Spleen (tissue), 13 donors: ENCODE measurements at regions of chr6 and their contacts with region 1.

Region 1: DNA sequence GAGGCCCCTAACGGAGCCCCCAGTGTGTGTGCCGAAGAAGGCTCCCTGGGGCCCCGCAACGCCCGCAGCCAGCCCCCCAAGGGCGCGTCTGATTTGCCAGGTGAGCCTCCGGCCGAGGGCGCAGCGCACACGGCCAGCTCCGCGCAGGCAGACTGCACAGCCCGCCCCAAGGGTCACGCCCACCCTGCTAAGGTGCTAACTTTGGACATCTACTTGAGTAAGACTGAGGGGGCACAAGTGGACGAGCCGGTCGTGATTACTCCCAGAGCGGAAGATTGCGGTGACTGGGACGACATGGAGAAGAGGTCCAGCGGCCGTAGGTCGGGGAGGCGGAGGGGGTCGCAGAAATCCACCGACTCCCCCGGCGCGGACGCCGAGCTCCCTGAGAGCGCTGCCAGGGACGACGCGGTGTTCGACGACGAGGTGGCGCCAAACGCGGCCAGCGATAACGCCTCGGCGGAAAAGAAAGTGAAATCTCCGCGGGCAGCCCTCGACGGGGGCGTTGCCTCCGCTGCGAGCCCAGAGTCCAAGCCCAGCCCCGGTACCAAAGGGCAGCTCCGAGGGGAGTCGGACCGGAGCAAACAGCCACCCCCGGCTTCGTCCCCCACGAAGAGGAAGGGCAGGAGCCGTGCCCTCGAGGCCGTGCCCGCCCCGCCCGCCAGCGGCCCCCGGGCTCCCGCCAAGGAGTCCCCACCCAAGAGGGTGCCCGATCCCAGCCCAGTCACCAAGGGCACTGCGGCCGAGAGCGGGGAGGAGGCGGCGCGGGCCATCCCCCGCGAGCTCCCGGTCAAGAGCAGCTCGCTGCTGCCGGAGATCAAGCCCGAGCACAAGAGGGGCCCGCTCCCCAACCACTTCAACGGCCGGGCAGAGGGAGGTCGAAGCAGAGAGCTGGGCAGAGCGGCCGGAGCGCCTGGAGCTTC is 117.0 kb downstream of the RTN4IP1 start:
- DNase-seq: peak; percentile 98
- H3K4me3 ChIP-seq: peak overlapping the region; percentile 60 to 92 (median 68)
- H3K27ac ChIP-seq: peak overlapping the region; percentile 93 to 100 (median 98)
- H3K4me1 ChIP-seq: peaks cover 27 to 80% (median 71%) of the 10 kb centered on the region in 6 donors
- H3K27me3 ChIP-seq: peaks cover 0 to 16% (median 4%) of the 10 kb centered on the region in 7 donors
- CTCF ChIP-seq: peak in 7 of 11 experiments; percentile 35 to 56 (median 44)
- POLR2A ChIP-seq: peak in 1 of 3 donors; percentile 49

Region 2: DNA sequence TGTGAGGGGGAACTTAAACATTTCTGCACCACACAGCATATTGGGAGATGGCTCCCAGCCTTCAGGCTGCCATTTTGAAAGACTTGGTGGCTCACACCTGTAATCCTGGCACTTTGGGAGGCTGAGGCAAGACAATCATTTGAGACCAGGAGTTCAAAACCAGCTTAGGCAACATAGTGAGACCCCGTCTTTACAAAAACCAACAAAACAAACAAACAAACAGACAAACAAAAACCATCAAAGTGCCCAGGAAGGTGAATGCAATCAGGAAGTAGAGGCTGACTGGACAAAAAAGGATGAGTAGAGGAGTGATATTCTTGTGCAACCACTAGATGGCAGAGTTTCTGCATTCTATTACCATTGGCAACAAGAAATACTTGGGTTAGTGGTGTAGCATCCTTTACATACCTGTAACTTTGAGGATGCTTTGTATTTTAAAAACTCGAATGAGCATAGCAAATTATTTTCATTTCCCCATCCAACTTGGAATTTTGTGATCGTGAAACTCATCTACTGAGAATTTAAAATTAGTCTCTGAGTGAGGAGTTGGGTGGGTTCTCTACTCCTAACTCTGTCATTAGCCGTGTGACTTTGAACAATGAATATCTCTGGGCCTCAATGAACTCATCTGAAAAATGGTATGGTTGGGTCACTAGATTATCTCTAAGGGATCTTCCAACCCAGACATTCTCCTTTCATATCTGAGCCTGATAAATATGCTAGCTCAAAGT is 67.4 kb before region 1 on chr6:
- intact Hi-C with region 1: loop called (anchors 10 kb)
- DNase-seq: no peak
- H3K4me3 ChIP-seq: no peak overlapping the region
- H3K27ac ChIP-seq: no peak overlapping the region
- H3K4me1 ChIP-seq: peaks cover 4 to 43% (median 17%) of the 10 kb centered on the region in 6 donors
- H3K27me3 ChIP-seq: peaks cover 0 to 33% (median 0%) of the 10 kb centered on the region in 7 donors
- CTCF ChIP-seq: peak; percentile 70 to 91 (median 81)
- POLR2A ChIP-seq: no peak

Region 3: GRCh38 chr6:106556368-106556960 is 44.2 kb after region 1 on chr6:
- intact Hi-C with region 1: loop called (anchors 5 kb)
- DNase-seq: no peak
- H3K4me3 ChIP-seq: no peak overlapping the region
- H3K27ac ChIP-seq: no peak overlapping the region
- H3K4me1 ChIP-seq: peaks cover 0 to 28% (median 0%) of the 10 kb centered on the region in 6 donors
- H3K27me3 ChIP-seq: no peaks in the 10 kb centered on the region
- CTCF ChIP-seq: peak in 8 of 11 experiments; percentile 30 to 60 (median 44)
- POLR2A ChIP-seq: no peak